ENCODE measurements at regions of chrX and their contacts with region 1.

Region 1: GRCh38 chrX:48891402-48892288 is 5.9 kb downstream of the TIMM17B start:
- DNase-seq: peak; percentile 46 to 88 (median 75)
- ATAC-seq: peak; percentile 87
- H3K4me3 ChIP-seq: peak overlapping the region; percentile 56 to 59
- H3K4me3 Mint-ChIP-seq: peak overlapping the region; percentile 89
- H3K27ac ChIP-seq: peak overlapping the region; percentile 31 to 40
- H3K27ac Mint-ChIP-seq: peak overlapping the region; percentile 27
- H3K4me1 ChIP-seq: peaks cover 14% of the 10 kb centered on the region
- H3K4me1 Mint-ChIP-seq: peaks cover 29% of the 10 kb centered on the region
- H3K27me3 ChIP-seq: no peaks in the 10 kb centered on the region
- H3K27me3 Mint-ChIP-seq: no peaks in the 10 kb centered on the region
- CTCF ChIP-seq: peak; percentile 51

Region 2: GRCh38 chrX:48648336-48648751 is 243.3 kb before region 1 on chrX:
- CTCF ChIA-PET with region 1: interaction called, 5 read pairs
- POLR2A ChIA-PET with region 1: interaction called, 3 read pairs
- intact Hi-C with region 1: loop called in 1 of 2 experiments (anchors 5 kb)
- DNase-seq: peak in 7 of 9 experiments; percentile 8 to 72 (median 41)
- ATAC-seq: peak; percentile 71
- H3K4me3 ChIP-seq: no peak overlapping the region
- H3K4me3 Mint-ChIP-seq: no peak overlapping the region
- H3K27ac ChIP-seq: no peak overlapping the region
- H3K27ac Mint-ChIP-seq: no peak overlapping the region
- H3K4me1 ChIP-seq: no peaks in the 10 kb centered on the region
- H3K4me1 Mint-ChIP-seq: peaks cover 7% of the 10 kb centered on the region
- H3K27me3 ChIP-seq: no peaks in the 10 kb centered on the region
- H3K27me3 Mint-ChIP-seq: no peaks in the 10 kb centered on the region
- CTCF ChIP-seq: peak; percentile 58

Region 3: DNA sequence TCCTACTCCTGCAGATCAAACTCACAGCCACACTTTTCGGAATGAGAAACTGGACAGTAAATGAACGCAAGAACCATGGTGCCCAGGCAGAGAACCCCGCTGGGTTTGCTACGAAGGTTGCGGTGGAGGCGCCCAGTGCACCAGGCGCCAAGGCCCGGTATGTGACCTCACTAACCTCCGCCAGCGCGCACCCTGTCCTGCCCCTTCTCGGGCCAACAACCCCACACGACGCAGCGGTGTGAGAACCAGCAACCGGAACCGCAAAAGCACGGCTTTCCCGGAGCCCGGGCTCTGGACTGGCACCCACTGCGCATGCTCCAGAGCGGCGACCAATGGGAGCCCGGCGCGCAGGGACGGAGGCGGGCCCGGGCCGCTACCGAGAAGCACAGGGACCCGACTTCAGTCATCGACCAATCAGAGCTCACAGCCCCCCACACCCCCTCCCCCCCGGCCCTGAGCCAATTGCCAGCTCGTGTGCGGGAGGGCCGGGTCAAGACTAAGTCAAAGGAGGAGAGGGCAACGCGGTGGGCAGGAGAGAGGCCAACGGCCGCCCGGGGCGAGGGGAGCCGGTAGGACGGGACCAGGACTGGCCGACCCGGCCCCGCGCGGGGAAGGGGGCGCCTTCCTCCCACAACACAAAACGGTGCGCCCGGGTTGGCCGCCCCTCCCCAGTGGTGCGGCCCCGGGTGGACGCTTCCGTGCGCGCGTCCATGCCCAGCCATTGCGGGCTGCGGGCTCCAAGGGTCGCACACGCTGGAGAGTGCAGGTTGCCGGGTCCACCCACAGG is 215.3 kb before region 1 on chrX:
- CTCF ChIA-PET with region 1: no interaction called
- POLR2A ChIA-PET with region 1: no interaction called
- intact Hi-C with region 1: loop called in 1 of 2 experiments (anchors 1 kb)
- DNase-seq: peak; percentile 73 to 93 (median 83)
- ATAC-seq: peak; percentile 94
- H3K4me3 ChIP-seq: peak overlapping the region; percentile 74 to 76
- H3K4me3 Mint-ChIP-seq: peak overlapping the region; percentile 92
- H3K27ac ChIP-seq: peak overlapping the region; percentile 78 to 86
- H3K27ac Mint-ChIP-seq: peak overlapping the region; percentile 93
- H3K4me1 ChIP-seq: peaks cover 6% of the 10 kb centered on the region
- H3K4me1 Mint-ChIP-seq: peaks cover 30% of the 10 kb centered on the region
- H3K27me3 ChIP-seq: no peaks in the 10 kb centered on the region
- H3K27me3 Mint-ChIP-seq: no peaks in the 10 kb centered on the region
- CTCF ChIP-seq: no peak

Region 4: DNA sequence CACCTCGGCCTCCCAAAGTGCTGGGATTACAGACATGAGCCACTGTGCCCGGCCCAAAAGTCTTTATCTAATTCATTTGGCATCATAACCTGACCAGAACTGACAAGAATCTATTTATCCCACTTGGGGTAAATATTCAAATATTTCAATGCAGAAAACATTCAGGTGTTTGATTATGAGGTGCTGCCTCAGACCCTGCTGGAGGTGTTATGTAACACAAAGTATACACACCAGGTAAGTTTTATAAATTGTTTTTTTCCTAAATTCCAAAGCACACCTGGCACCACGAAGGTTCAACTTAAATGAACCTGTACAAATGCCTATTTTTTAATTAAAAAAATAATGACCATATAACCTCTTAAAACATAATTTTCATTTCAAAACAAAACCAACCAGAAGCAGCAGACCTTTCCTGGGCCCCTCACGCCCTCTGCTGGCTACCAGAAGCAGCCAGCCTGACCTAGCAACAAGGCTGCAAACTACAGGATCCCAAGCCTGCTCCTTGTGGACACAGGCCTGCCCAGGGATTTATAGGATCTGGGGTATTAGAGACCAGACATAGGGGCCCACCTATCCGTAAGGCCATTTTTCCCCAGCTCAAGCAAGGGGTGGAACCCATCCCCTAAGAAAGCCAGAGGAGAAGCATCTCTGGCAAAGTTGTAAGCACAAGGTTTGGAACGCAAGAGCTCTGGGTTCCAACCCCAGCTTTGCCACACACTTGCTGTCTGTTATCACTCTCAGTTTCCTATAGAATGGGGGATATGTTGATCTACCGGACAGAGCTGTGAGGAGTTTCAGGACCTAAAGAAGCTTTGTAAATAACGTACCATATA is 54.1 kb after region 1 on chrX:
- CTCF ChIA-PET with region 1: interaction called, 14 read pairs
- POLR2A ChIA-PET with region 1: interaction called, 3 read pairs
- intact Hi-C with region 1: loop called (anchors 1 to 2 kb)
- DNase-seq: peak in 8 of 9 experiments; percentile 10 to 78 (median 62)
- ATAC-seq: peak; percentile 70
- H3K4me3 ChIP-seq: no peak overlapping the region
- H3K4me3 Mint-ChIP-seq: peak overlapping the region; percentile 11
- H3K27ac ChIP-seq: no peak overlapping the region
- H3K27ac Mint-ChIP-seq: peak overlapping the region; percentile 67
- H3K4me1 ChIP-seq: peaks cover 52% of the 10 kb centered on the region
- H3K4me1 Mint-ChIP-seq: peaks cover 45% of the 10 kb centered on the region
- H3K27me3 ChIP-seq: no peaks in the 10 kb centered on the region
- H3K27me3 Mint-ChIP-seq: no peaks in the 10 kb centered on the region
- CTCF ChIP-seq: peak; percentile 68